Activated B cell treated with CpG ODN at 0.5 μM for 24 hours (primary cell): ENCODE measurements at regions of chr14 and their contacts with region 1.

Region 1: DNA sequence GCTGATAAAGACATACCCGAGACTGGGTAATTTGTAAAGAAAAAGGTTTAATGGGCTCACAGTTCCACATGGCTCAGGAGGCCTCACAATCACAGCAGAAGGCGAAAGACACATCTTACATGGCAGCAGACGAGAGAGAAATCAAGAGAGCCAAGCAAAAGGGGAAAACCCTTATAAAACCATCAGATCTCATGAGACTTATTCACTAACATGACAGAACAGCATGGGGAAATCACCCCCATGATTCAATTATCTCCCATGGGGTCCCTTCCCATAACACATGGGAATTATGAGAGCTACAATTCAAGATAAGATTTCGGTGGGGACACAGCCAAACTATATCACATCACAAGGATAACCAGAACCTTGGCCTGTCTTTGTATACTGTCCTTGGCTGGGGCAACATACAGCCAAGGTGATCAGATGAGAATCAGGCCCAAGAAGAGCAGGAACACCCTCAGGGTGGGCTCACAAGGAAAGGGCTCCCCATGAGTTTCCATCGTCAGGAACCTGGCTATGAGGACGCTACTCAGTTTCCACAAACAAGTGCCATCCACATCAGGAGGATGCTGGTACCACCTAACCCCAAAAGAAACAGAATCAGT is 152.7 kb downstream of the FOXN3 start:
- DNase-seq: no peak
- ATAC-seq: peak; percentile 90
- H3K4me3 Mint-ChIP-seq: peak overlapping the region; percentile 75
- H3K27ac Mint-ChIP-seq: peak overlapping the region; percentile 94
- H3K4me1 Mint-ChIP-seq: peaks cover 73% of the 10 kb centered on the region
- H3K27me3 Mint-ChIP-seq: no peaks in the 10 kb centered on the region
- CTCF ChIP-seq: no peak

Region 2: DNA sequence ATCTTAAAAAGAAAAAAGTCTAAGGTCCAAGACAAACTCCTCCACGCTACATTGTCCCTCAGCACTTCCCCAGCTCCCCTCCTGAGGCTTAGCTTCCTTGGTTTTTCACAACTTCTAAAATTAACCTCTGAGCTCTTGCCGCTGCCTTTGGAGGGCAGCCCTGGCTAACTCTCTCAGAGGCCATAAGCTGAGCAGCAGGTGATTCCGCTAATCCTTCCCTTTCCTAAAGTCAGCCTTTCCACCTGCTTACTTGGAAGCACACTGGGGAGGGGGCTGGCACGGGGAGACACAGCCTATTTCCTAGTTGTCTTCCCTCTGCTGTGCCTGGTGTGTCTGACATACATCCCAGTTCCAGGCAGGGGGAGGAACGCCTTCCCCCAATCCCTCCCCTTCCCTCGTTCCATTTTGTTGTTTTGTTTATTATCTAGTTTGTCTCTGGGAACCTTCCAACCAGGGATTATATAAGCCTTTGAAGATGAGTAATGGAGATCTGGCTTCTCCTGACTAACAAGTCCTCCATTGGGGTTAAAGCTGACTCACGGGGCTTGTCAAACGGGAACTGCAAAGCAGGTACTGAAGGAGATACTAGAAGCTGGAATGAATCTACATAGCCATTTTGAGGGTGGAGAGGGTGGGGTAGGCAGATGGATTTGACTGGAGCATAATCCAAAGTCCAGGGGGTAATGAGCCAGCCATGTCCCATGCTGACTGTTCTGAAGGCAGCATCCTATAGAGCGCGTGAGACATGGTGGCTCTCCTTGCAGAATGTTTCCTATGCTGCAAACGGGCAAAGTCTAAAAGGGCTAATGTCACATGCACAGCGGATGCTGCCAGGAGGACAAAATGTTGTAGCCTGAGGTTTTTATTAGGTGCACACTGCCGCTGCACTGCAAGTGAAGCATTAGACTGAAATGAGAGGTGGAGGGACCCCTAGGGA is 78.1 kb before region 1 on chr14:
- CTCF ChIA-PET with region 1: no interaction called
- POLR2A ChIA-PET with region 1: no interaction called
- intact Hi-C with region 1: loop called (anchors 2 kb)
- DNase-seq: no peak
- ATAC-seq: no peak
- H3K4me3 Mint-ChIP-seq: peak overlapping the region; percentile 69
- H3K27ac Mint-ChIP-seq: peak overlapping the region; percentile 91
- H3K4me1 Mint-ChIP-seq: peaks cover 41% of the 10 kb centered on the region
- H3K27me3 Mint-ChIP-seq: no peaks in the 10 kb centered on the region
- CTCF ChIP-seq: no peak

Region 3: GRCh38 chr14:89221109-89221810 is 43.0 kb before region 1 on chr14:
- CTCF ChIA-PET with region 1: no interaction called
- POLR2A ChIA-PET with region 1: no interaction called
- intact Hi-C with region 1: loop called (anchors 2 kb)
- DNase-seq: no peak
- ATAC-seq: peak; percentile 62
- H3K4me3 Mint-ChIP-seq: no peak overlapping the region
- H3K27ac Mint-ChIP-seq: no peak overlapping the region
- H3K4me1 Mint-ChIP-seq: peaks cover 17% of the 10 kb centered on the region
- H3K27me3 Mint-ChIP-seq: no peaks in the 10 kb centered on the region
- CTCF ChIP-seq: no peak

Region 4: GRCh38 chr14:89241934-89242651 is 22.2 kb before region 1 on chr14:
- CTCF ChIA-PET with region 1: interaction called, 3 read pairs
- POLR2A ChIA-PET with region 1: interaction called, 3 read pairs
- intact Hi-C with region 1: loop called (anchors 2 kb)
- DNase-seq: no peak
- ATAC-seq: no peak
- H3K4me3 Mint-ChIP-seq: peak overlapping the region; percentile 4
- H3K27ac Mint-ChIP-seq: peak overlapping the region; percentile 3
- H3K4me1 Mint-ChIP-seq: peaks cover 56% of the 10 kb centered on the region
- H3K27me3 Mint-ChIP-seq: no peaks in the 10 kb centered on the region
- CTCF ChIP-seq: no peak

Region 5: DNA sequence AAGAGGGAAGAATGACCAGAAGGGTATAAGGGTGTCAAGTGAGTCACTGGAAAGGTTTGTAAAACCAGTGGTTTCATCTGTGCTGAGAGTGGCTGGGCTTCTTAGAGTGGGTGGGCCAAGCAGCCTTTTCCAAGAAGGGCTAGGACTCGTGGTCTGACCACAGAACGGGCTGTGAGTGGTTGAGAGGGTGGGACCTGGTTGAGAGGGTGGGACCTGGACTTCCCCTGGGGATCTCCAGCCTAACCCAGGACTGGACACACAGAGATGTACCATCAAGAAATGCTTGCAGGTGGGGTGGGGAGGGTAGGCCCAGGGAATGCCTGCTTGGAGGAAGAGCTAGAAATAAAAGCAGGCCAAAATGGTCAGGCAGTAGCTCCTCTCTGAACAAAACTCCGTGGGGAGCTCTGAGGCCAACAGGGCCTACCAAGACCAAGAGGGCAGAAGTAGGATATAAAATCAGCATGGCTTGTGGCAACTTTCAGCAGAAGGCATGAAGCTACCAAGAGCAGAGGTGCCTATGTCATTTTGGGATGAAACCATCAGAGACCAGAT is 12.2 kb after region 1 on chr14:
- CTCF ChIA-PET with region 1: no interaction called
- POLR2A ChIA-PET with region 1: interaction called, 6 read pairs
- intact Hi-C with region 1: loop called (anchors 1 kb)
- DNase-seq: peak; percentile 41
- ATAC-seq: peak; percentile 87
- H3K4me3 Mint-ChIP-seq: peak overlapping the region; percentile 52
- H3K27ac Mint-ChIP-seq: peak overlapping the region; percentile 89
- H3K4me1 Mint-ChIP-seq: peaks cover 55% of the 10 kb centered on the region
- H3K27me3 Mint-ChIP-seq: no peaks in the 10 kb centered on the region
- CTCF ChIP-seq: no peak

Region 6: DNA sequence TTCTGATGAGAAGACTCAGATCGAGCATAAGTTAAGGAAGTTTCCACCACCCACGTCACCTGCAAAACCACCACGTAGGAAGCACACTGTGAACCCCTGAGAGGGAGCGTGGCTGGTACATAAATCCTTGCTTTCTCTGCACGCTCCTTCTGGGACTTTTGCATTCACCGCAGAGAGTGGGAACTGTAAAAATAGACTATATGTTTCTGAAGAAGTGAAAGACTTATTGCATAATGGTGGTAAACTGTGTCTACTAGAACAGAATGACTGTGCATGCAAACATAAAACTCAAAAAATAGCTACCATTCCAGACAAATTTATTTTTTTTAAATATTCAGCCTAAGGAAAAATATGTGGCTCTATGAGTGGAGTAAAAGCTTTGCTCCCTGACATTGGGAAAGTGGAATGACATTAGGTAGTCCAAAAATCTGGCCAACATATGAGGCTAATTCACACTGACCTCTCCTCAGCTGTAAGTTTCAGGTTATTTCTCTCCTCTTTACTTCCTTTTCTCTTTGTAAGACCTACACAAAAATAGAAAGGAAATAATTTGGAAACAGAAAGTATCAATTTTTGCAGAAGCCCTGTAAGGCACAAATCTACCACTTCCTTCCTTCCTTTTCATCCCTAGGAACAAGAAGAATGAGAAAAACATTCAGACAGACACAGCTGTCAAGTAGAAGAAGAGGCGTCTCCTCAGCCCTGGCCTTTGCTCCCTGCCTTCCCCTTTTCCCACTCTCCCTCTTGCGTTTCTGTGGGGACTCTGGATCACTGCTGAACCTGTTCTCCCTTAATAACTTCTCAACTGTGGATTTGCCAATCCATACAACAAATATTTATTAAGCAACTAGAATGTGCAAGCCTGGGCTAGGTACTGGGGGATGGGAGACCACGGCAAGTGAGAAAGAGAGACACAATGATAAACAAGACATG is 417.1 kb after region 1 on chr14:
- CTCF ChIA-PET with region 1: no interaction called
- POLR2A ChIA-PET with region 1: no interaction called
- intact Hi-C with region 1: no loop called
- DNase-seq: no peak
- ATAC-seq: peak; percentile 84
- H3K4me3 Mint-ChIP-seq: peak overlapping the region; percentile 67
- H3K27ac Mint-ChIP-seq: peak overlapping the region; percentile 80
- H3K4me1 Mint-ChIP-seq: peaks cover 30% of the 10 kb centered on the region
- H3K27me3 Mint-ChIP-seq: no peaks in the 10 kb centered on the region
- CTCF ChIP-seq: no peak